ENCODE measurements at regions of chr21 and their contacts with region 1.

Region 1: GRCh38 chr21:32612075-32612998 is at the start of gene CFAP298:
- DNase-seq: peak; percentile 76 to 98 (median 88)
- ATAC-seq: peak; percentile 91
- H3K4me3 ChIP-seq: peak within 1 kb of the TSS; percentile 65 to 74
- H3K4me3 Mint-ChIP-seq: peak within 1 kb of the TSS; percentile 96
- H3K27ac ChIP-seq: peak within 1 kb of the TSS; percentile 79 to 96
- H3K27ac Mint-ChIP-seq: peak within 1 kb of the TSS; percentile 97
- H3K4me1 ChIP-seq: peaks cover 21% of the 10 kb centered on the region
- H3K4me1 Mint-ChIP-seq: peaks cover 27% of the 10 kb centered on the region
- H3K27me3 ChIP-seq: no peaks in the 10 kb centered on the region
- H3K27me3 Mint-ChIP-seq: no peaks in the 10 kb centered on the region
- CTCF ChIP-seq: no peak
- total RNA-seq, gene CFAP298: 7.5 to 9.1 TPM

Region 2: GRCh38 chr21:32278518-32279376 is 333.6 kb before region 1 on chr21 and contains the start of gene MIS18A:
- CTCF ChIA-PET with region 1: no interaction called
- POLR2A ChIA-PET with region 1: interaction called, 4 read pairs
- intact Hi-C with region 1: loop called (anchors 1 to 2 kb)
- DNase-seq: peak; percentile 95 to 99 (median 97)
- ATAC-seq: peak; percentile 95
- H3K4me3 ChIP-seq: peak within 1 kb of the TSS; percentile 67 to 74
- H3K4me3 Mint-ChIP-seq: peak within 1 kb of the TSS; percentile 99
- H3K27ac ChIP-seq: peak within 1 kb of the TSS; percentile 33 to 69
- H3K27ac Mint-ChIP-seq: peak within 1 kb of the TSS; percentile 92
- H3K4me1 ChIP-seq: peaks cover 16% of the 10 kb centered on the region
- H3K4me1 Mint-ChIP-seq: peaks cover 31% of the 10 kb centered on the region
- H3K27me3 ChIP-seq: no peaks in the 10 kb centered on the region
- H3K27me3 Mint-ChIP-seq: no peaks in the 10 kb centered on the region
- CTCF ChIP-seq: no peak
- total RNA-seq, gene MIS18A: 3.7 to 5.1 TPM

Region 3: GRCh38 chr21:32412162-32413014 is 199.9 kb before region 1 on chr21 and contains the start of gene EVA1C:
- CTCF ChIA-PET with region 1: no interaction called
- POLR2A ChIA-PET with region 1: interaction called, 6 read pairs
- intact Hi-C with region 1: loop called in 1 of 2 experiments (anchors 5 kb)
- DNase-seq: peak; percentile 51 to 90 (median 76)
- ATAC-seq: peak; percentile 71
- H3K4me3 ChIP-seq: peak within 1 kb of the TSS; percentile 63 to 96
- H3K4me3 Mint-ChIP-seq: peak within 1 kb of the TSS; percentile 95
- H3K27ac ChIP-seq: peak within 1 kb of the TSS; percentile 86 to 93
- H3K27ac Mint-ChIP-seq: peak within 1 kb of the TSS; percentile 96
- H3K4me1 ChIP-seq: peaks cover 35% of the 10 kb centered on the region
- H3K4me1 Mint-ChIP-seq: peaks cover 48% of the 10 kb centered on the region
- H3K27me3 ChIP-seq: no peaks in the 10 kb centered on the region
- H3K27me3 Mint-ChIP-seq: no peaks in the 10 kb centered on the region
- CTCF ChIP-seq: peak; percentile 23
- total RNA-seq, gene EVA1C: 6.9 to 10.3 TPM

Region 4: DNA sequence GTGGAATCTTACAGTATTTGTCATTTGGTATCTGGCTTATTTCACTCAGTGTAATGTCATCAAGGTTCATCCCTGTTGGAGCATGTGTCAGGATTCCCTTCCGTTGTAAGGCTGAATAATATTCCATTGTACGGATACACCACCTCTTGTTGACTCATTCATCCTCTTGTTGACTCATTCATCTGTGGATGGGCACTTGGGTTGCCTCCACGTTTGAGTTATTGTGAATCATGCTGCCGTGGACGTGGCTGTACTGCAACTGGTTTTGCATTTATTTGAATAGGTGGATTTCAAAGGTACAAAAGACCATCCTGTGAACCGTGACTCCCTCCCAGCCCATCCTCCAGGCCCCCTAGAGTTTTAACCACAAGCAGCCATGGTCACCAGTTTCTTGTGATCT is 15.1 kb before region 1 on chr21:
- CTCF ChIA-PET with region 1: interaction called, 33 read pairs
- POLR2A ChIA-PET with region 1: interaction called, 5 read pairs
- intact Hi-C with region 1: no loop called
- DNase-seq: no peak
- ATAC-seq: no peak
- H3K4me3 ChIP-seq: no peak overlapping the region
- H3K4me3 Mint-ChIP-seq: no peak overlapping the region
- H3K27ac ChIP-seq: no peak overlapping the region
- H3K27ac Mint-ChIP-seq: peak overlapping the region; percentile 24
- H3K4me1 ChIP-seq: no peaks in the 10 kb centered on the region
- H3K4me1 Mint-ChIP-seq: no peaks in the 10 kb centered on the region
- H3K27me3 ChIP-seq: no peaks in the 10 kb centered on the region
- H3K27me3 Mint-ChIP-seq: no peaks in the 10 kb centered on the region
- CTCF ChIP-seq: no peak

Region 5: GRCh38 chr21:33324291-33325221 is 712.2 kb after region 1 on chr21 and contains the start of gene IFNAR1:
- CTCF ChIA-PET with region 1: no interaction called
- POLR2A ChIA-PET with region 1: no interaction called
- intact Hi-C with region 1: loop called in 1 of 2 experiments (anchors 10 kb)
- DNase-seq: peak; percentile 98 to 100 (median 99)
- ATAC-seq: peak; percentile 92
- H3K4me3 ChIP-seq: peak within 1 kb of the TSS; percentile 80 to 92
- H3K4me3 Mint-ChIP-seq: no peak within 1 kb of the TSS
- H3K27ac ChIP-seq: peak within 1 kb of the TSS; percentile 88 to 92
- H3K27ac Mint-ChIP-seq: no peak within 1 kb of the TSS
- H3K4me1 ChIP-seq: peaks cover 31% of the 10 kb centered on the region
- H3K4me1 Mint-ChIP-seq: peaks cover 30% of the 10 kb centered on the region
- H3K27me3 ChIP-seq: no peaks in the 10 kb centered on the region
- H3K27me3 Mint-ChIP-seq: no peaks in the 10 kb centered on the region
- CTCF ChIP-seq: no peak
- total RNA-seq, gene IFNAR1: 15.1 to 18.6 TPM

Region 6: GRCh38 chr21:33542640-33543504 is 930.5 kb after region 1 on chr21 and contains the start of gene SON:
- CTCF ChIA-PET with region 1: no interaction called
- POLR2A ChIA-PET with region 1: no interaction called
- intact Hi-C with region 1: loop called in 1 of 2 experiments (anchors 5 kb)
- DNase-seq: peak; percentile 93 to 99 (median 96)
- ATAC-seq: peak; percentile 89
- H3K4me3 ChIP-seq: peak within 1 kb of the TSS; percentile 87 to 88
- H3K4me3 Mint-ChIP-seq: peak within 1 kb of the TSS; percentile 96
- H3K27ac ChIP-seq: peak within 1 kb of the TSS; percentile 99
- H3K27ac Mint-ChIP-seq: peak within 1 kb of the TSS; percentile 99
- H3K4me1 ChIP-seq: peaks cover 44% of the 10 kb centered on the region
- H3K4me1 Mint-ChIP-seq: peaks cover 55% of the 10 kb centered on the region
- H3K27me3 ChIP-seq: no peaks in the 10 kb centered on the region
- H3K27me3 Mint-ChIP-seq: no peaks in the 10 kb centered on the region
- CTCF ChIP-seq: no peak
- total RNA-seq, gene SON: 418 to 422 TPM